Mammary epithelial cell (primary cell): ENCODE measurements at regions of chr11 and their contacts with region 1.

Region 1: DNA sequence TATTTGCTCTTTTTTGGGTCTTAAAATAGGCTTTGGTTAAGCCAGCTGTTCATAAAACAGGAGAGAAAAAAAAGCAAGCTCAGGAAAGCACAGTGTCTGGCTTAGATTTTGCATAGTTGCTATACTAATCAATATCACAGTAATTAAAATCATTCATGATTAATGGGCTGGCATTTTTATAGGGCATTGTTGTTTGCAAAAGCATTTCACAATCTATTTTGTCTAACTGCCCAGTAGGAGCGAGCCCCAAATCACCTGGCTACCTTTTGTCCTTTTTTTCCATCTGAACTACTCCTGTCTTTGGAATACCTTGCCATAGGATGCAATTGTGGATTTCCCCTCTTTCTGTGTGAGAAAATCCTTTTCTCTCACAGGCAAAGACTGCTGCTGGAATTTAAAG is 619.8 kb downstream of the JRKL start:
- DNase-seq: no peak
- H3K4me3 ChIP-seq: no peak overlapping the region
- H3K27ac ChIP-seq: no peak overlapping the region
- H3K4me1 ChIP-seq: no peaks in the 10 kb centered on the region
- H3K27me3 ChIP-seq: no peaks in the 10 kb centered on the region
- CTCF ChIP-seq: no peak

Region 2: DNA sequence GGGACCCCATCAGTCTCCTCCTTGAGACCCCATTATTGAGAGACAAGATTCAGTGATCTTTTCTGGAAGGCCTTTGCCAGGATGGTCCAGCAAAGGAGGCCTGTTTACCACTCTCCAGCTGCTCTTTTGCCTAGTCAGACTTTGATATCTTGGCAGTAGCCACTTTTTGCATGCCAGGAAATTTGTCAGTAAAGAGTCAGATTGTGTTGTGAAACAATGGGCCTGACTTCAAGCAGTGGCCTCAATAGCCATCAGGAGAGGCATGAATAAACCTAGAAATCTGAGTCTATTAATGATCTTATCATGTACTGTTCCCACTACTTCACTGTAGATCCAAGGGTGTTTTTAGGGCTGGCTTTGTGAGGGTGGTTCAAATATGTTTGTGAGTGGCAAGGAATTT is 140.4 kb before region 1 on chr11:
- CTCF ChIA-PET with region 1: no interaction called
- dilution Hi-C with region 1: loop called (anchors 10 kb)
- in situ Hi-C with region 1: no loop called
- intact Hi-C with region 1: no loop called
- DNase-seq: peak; percentile 20
- H3K4me3 ChIP-seq: no peak overlapping the region
- H3K27ac ChIP-seq: no peak overlapping the region
- H3K4me1 ChIP-seq: no peaks in the 10 kb centered on the region
- H3K27me3 ChIP-seq: no peaks in the 10 kb centered on the region
- CTCF ChIP-seq: no peak